ENCODE measurements at regions of chr7 and their contacts with region 1.

Region 1: DNA sequence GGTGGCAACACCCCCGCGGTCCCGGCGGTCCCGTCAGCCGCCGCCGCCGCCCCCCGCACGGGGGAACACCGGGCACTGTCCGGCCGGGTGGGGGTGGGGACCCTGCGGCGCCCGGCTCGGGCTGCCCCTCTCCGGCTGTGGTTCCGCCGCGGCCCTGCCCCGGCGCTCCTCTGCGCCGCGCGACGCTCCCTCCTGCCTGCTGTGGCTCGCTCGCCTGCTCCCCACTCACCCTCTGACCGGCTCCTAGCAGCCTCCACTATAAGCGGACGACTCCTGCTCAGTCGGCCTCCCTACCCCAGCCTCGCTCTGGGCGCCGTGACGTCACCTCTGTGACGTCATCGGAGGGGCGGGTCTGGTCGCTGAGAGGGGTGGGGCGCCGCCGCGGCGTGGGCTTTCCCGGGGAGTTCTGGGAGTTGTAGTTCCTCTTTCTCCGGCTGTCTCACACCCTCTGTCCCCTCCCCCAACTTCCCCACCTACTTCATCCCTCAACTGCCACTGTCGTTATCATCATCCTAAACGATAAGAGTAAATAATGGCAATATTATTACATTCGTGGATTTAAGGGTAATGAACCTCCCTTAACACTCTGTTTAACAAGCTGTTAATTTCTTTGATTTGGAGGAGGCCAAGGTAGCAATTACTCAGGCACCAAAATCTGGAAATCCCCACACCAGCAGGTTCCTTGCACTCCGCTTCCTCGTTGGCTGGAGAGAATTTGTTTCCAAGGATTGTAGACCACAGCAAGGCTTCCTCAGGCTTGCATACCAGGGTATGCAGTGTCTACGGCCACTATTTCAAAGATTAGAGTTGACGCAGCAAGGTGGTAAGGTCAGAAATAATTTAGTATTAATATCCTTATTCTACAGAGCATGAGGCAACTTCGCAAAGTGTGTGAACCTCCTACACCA is at the start of gene UBE2H:
- DNase-seq: peak; percentile 86 to 97 (median 93)
- ATAC-seq: peak; percentile 76
- H3K4me3 ChIP-seq: peak within 1 kb of the TSS; percentile 81 to 83
- H3K4me3 Mint-ChIP-seq: peak within 1 kb of the TSS; percentile 100
- H3K27ac ChIP-seq: peak within 1 kb of the TSS; percentile 89 to 91
- H3K27ac Mint-ChIP-seq: peak within 1 kb of the TSS; percentile 99
- H3K4me1 ChIP-seq: peaks cover 38% of the 10 kb centered on the region
- H3K4me1 Mint-ChIP-seq: peaks cover 9% of the 10 kb centered on the region
- H3K27me3 ChIP-seq: no peaks in the 10 kb centered on the region
- H3K27me3 Mint-ChIP-seq: no peaks in the 10 kb centered on the region
- CTCF ChIP-seq: no peak
- total RNA-seq, gene UBE2H: 53.7 to 63.6 TPM

Region 2: DNA sequence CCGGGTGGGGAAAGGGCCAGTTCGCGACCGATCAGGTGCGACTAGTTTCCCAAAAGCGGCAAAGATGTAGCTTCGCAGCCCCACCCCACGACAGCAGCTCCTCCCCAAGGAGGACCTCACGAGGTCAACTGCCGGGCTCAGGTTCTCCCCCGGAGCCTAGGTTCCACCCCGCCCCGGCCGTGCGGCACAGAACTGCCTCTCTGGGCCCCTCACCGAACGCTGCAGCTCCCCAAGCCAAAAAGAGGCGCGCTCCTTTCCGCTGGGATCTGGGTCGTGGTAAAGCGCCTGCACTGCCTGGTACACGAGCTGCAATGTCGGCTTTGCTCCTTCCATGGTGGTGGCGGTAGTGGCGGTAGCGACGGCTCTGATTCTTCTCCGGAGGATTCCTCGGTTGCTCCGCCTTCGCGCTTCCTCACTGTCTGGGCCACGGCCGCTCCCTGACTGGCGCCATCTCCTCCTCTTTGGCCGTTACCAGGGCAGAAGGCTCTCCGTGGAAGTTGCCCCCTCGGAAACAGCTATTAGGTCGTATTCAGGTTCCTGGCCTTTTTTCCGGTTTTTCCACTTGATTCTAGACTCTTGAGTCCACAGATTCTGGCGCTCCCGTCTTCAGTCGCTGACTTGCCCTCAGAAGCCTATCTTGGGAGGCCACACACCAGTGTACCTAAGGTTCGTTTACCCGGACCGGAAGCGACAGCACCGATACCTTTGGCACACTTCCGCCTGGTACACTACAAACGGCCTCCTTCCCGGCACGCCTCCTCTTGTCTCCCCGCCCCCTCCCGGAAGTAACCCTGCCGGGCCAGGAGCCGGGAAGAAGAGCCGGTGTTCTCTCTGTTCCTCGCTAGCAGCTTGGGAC is 898.2 kb before region 1 on chr7 and contains the start of gene TNPO3:
- CTCF ChIA-PET with region 1: no interaction called
- POLR2A ChIA-PET with region 1: no interaction called
- intact Hi-C with region 1: loop called in 1 of 2 experiments (anchors 2 kb)
- DNase-seq: peak; percentile 77 to 94 (median 90)
- ATAC-seq: peak; percentile 86
- H3K4me3 ChIP-seq: peak within 1 kb of the TSS; percentile 80 to 89
- H3K4me3 Mint-ChIP-seq: peak within 1 kb of the TSS; percentile 96
- H3K27ac ChIP-seq: peak within 1 kb of the TSS; percentile 84 to 93
- H3K27ac Mint-ChIP-seq: peak within 1 kb of the TSS; percentile 98
- H3K4me1 ChIP-seq: peaks cover 29% of the 10 kb centered on the region
- H3K4me1 Mint-ChIP-seq: peaks cover 38% of the 10 kb centered on the region
- H3K27me3 ChIP-seq: no peaks in the 10 kb centered on the region
- H3K27me3 Mint-ChIP-seq: peaks cover 3% of the 10 kb centered on the region
- CTCF ChIP-seq: no peak
- total RNA-seq, gene TNPO3: 17.0 to 17.2 TPM

Region 3: DNA sequence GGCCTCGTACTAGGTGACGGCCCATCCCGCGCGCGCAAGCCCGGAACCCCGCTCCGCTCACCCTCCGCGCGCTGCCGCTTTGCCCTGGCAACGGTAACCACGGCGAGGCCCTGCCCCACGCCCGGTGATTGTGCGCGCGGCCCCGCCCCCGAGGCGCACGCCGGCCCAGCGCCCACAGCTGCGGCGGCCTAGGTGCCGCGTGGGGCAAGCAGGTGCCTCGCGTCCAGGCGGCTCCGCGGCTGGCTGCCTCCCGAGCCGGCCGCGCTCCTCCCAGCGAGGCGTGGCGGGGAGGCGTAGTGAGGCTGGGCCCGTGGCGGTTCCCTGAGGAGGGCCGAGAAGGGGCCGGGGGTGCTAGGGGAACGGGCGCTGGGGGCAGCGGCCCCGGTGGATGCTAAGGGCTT is 450.5 kb before region 1 on chr7 and contains the start of gene SMKR1:
- CTCF ChIA-PET with region 1: no interaction called
- POLR2A ChIA-PET with region 1: no interaction called
- intact Hi-C with region 1: loop called in 1 of 2 experiments (anchors 10 kb)
- DNase-seq: peak; percentile 85 to 98 (median 93)
- ATAC-seq: peak; percentile 95
- H3K4me3 ChIP-seq: peak within 1 kb of the TSS; percentile 63 to 71
- H3K4me3 Mint-ChIP-seq: peak within 1 kb of the TSS; percentile 79
- H3K27ac ChIP-seq: peak within 1 kb of the TSS; percentile 64 to 75
- H3K27ac Mint-ChIP-seq: peak within 1 kb of the TSS; percentile 86
- H3K4me1 ChIP-seq: peaks cover 13% of the 10 kb centered on the region
- H3K4me1 Mint-ChIP-seq: peaks cover 17% of the 10 kb centered on the region
- H3K27me3 ChIP-seq: no peaks in the 10 kb centered on the region
- H3K27me3 Mint-ChIP-seq: no peaks in the 10 kb centered on the region
- CTCF ChIP-seq: no peak
- total RNA-seq, gene SMKR1: 0.56 to 0.68 TPM

Region 4: DNA sequence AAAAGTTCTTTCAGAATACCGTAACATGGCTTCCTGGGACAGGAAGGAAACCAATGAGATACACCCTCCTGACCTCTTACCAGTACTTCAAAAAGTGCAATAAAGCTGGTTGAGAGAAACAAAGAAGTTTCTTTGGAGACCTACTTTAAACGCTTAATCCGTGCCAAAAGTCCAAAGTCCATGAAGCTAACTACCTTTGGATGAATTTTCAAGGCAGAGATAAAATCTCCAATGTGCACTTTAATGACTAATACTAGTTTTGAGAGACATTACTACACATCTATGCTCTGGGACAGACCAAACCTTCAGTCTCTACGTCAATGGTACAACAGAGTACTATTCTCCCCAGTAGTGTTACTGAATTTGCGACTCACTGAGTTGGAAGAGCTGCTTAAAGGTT is 46.2 kb before region 1 on chr7:
- CTCF ChIA-PET with region 1: no interaction called
- POLR2A ChIA-PET with region 1: interaction called, 4 read pairs
- intact Hi-C with region 1: loop called in 1 of 2 experiments (anchors 5 kb)
- DNase-seq: peak in 2 of 9 experiments; percentile 11 to 52
- ATAC-seq: peak; percentile 84
- H3K4me3 ChIP-seq: peak overlapping the region in 1 of 2 experiments; percentile 9
- H3K4me3 Mint-ChIP-seq: peak overlapping the region; percentile 42
- H3K27ac ChIP-seq: peak overlapping the region; percentile 41 to 66
- H3K27ac Mint-ChIP-seq: peak overlapping the region; percentile 82
- H3K4me1 ChIP-seq: peaks cover 69% of the 10 kb centered on the region
- H3K4me1 Mint-ChIP-seq: peaks cover 85% of the 10 kb centered on the region
- H3K27me3 ChIP-seq: no peaks in the 10 kb centered on the region
- H3K27me3 Mint-ChIP-seq: no peaks in the 10 kb centered on the region
- CTCF ChIP-seq: no peak

Region 5: DNA sequence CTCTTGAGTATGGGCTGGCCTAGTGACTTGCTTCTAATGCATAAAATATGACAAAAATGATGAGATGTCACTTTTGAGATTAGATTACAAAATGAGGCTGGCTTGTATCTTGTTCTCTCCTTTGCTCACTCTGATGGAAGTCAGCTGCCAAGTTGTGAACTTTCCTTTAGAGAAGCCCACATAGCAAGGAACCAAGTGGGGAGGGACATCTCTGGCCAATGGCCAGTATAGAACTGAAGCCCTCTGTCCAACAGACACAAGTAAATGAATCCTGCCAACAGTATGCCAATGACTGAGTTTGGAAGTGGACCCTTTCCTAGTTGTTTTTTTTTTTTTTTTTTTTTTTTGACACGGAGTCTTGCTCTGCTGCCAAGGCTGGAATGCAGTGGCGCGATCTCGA is 94.9 kb after region 1 on chr7:
- CTCF ChIA-PET with region 1: no interaction called
- POLR2A ChIA-PET with region 1: no interaction called
- intact Hi-C with region 1: loop called (anchors 5 kb)
- DNase-seq: no peak
- ATAC-seq: no peak
- H3K4me3 ChIP-seq: no peak overlapping the region
- H3K4me3 Mint-ChIP-seq: no peak overlapping the region
- H3K27ac ChIP-seq: no peak overlapping the region
- H3K27ac Mint-ChIP-seq: no peak overlapping the region
- H3K4me1 ChIP-seq: peaks cover 3% of the 10 kb centered on the region
- H3K4me1 Mint-ChIP-seq: peaks cover 14% of the 10 kb centered on the region
- H3K27me3 ChIP-seq: no peaks in the 10 kb centered on the region
- H3K27me3 Mint-ChIP-seq: no peaks in the 10 kb centered on the region
- CTCF ChIP-seq: no peak

Region 6: GRCh38 chr7:130345120-130345519 is 392.2 kb after region 1 on chr7:
- CTCF ChIA-PET with region 1: no interaction called
- POLR2A ChIA-PET with region 1: no interaction called
- intact Hi-C with region 1: no loop called
- DNase-seq: no peak
- ATAC-seq: no peak
- H3K4me3 ChIP-seq: no peak overlapping the region
- H3K4me3 Mint-ChIP-seq: no peak overlapping the region
- H3K27ac ChIP-seq: no peak overlapping the region
- H3K27ac Mint-ChIP-seq: no peak overlapping the region
- H3K4me1 ChIP-seq: no peaks in the 10 kb centered on the region
- H3K4me1 Mint-ChIP-seq: no peaks in the 10 kb centered on the region
- H3K27me3 ChIP-seq: no peaks in the 10 kb centered on the region
- H3K27me3 Mint-ChIP-seq: no peaks in the 10 kb centered on the region
- CTCF ChIP-seq: no peak

Region 7: DNA sequence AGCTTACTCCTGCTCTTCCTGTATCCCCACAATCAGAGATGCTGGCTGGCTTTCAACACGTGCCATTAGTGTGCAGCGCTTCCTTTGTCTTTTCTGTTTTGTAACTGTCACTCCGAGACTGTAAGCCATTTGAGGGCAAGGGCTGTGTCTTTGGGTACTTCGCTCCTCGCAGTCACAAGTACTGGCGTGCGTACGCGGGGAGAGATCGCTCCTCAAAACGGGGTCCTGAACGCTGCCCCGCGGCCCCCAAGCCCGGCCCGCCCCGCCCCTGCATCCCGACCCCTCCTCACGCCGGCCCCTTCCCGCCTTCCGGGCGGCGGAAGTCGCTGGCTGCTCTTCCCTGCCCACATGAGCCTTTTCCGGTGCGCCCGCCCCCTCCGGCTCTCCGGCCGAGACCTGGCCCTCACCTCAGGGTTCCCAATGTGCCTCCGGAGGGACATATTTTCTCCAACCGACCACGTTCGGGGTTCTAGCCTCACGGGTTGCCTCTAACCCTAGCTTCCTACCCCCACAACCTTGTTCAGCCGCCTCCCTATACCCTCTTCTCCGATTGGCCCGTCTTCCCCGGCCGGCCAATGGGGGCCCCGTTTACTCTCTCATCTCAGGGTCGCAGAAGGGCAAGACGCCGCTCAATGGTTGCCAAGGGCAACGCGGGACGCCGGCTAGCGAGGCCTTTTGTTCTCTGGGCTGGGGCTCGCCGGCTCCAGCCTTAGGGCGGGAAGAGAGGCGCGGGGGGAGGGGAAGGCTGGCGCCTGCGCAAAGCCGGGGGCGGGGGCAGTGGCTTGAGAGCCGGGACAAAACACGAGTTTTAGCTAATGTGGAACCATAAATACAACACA is 487.8 kb after region 1 on chr7 and contains the start of gene CEP41:
- CTCF ChIA-PET with region 1: no interaction called
- POLR2A ChIA-PET with region 1: no interaction called
- intact Hi-C with region 1: loop called in 1 of 2 experiments (anchors 5 kb)
- DNase-seq: peak; percentile 82 to 94 (median 89)
- ATAC-seq: peak; percentile 96
- H3K4me3 ChIP-seq: peak within 1 kb of the TSS; percentile 81 to 99
- H3K4me3 Mint-ChIP-seq: peak within 1 kb of the TSS; percentile 99
- H3K27ac ChIP-seq: peak within 1 kb of the TSS; percentile 57 to 75
- H3K27ac Mint-ChIP-seq: peak within 1 kb of the TSS; percentile 97
- H3K4me1 ChIP-seq: peaks cover 31% of the 10 kb centered on the region
- H3K4me1 Mint-ChIP-seq: peaks cover 51% of the 10 kb centered on the region
- H3K27me3 ChIP-seq: no peaks in the 10 kb centered on the region
- H3K27me3 Mint-ChIP-seq: no peaks in the 10 kb centered on the region
- CTCF ChIP-seq: no peak
- total RNA-seq, gene CEP41: 4.8 to 5.5 TPM